ENCODE measurements at regions of chr1 and their contacts with region 1.

Region 1: DNA sequence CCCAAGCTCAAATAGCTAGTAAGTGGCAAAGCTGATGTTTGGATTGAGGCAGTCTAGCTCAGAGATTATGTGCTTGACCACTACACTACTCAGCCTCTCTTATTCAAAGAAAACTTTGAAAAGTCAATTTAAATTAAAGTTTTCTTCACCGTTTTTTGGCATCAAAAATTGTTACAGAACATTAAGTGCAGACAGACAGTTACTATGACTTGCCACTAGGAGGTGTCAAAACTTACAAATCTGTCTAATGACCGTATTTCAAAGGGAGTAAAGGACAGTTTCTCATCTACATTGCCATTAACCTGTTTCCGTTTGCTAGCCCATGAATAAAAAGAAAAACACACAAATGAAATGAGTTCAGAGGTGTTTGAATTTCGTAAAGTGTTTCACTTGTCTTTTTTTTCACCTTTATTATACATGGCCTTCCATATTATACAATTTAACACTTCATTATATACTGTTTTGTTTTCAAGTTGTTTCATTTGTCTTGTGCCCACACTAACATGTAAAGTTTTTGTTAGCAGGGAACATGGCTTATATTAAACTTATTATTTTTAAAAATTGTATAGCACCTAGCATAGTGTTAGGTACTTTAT is 57.4 kb upstream of the MTF2 start:
- DNase-seq: no peak
- H3K4me3 Mint-ChIP-seq: no peak overlapping the region
- H3K27ac Mint-ChIP-seq: no peak overlapping the region
- H3K4me1 Mint-ChIP-seq: peaks cover 6% of the 10 kb centered on the region
- H3K27me3 Mint-ChIP-seq: peaks cover 36% of the 10 kb centered on the region

Region 2: DNA sequence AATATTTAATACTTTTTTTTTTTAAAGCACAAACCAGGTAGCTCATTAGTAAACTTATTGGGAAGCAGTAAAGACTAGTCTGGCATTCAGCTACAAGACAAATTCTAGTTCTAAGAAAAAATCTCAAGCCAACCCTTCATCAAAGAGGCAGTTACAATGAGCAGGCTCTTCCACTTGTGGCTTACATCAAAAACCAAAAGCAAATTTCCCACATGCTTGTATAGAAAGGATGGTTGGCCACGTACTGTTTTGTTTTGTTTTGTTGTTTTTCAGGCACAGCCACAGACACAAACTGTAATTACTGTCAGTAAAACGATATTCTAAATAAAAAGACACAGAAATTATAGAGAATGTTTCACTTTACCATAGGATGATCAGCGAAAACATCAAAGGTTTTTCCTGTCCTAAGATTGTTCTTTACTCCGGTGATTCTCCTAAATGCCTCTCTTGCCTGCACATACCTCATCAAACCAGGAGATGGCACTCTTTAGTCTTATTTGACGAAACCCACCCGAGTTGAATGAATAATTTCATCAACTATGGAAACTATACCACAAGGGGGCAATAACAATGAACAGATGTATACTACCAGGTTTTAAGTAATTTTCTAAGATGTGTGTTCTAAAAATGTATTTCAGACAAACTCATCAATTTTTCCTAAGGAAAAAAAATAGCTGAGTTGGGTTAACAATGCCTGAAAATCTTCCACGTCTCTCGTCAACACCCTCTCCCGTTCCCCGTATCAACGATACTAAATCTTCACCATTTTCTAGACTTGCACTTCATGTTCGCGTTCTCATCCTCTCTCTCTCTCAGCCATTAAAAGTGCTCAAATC is 162.9 kb before region 1 on chr1:
- intact Hi-C with region 1: loop called (anchors 1 kb)
- DNase-seq: peak; percentile 57
- H3K4me3 Mint-ChIP-seq: peak overlapping the region; percentile 46
- H3K27ac Mint-ChIP-seq: peak overlapping the region; percentile 64
- H3K4me1 Mint-ChIP-seq: peaks cover 24% of the 10 kb centered on the region
- H3K27me3 Mint-ChIP-seq: no peaks in the 10 kb centered on the region

Region 3: DNA sequence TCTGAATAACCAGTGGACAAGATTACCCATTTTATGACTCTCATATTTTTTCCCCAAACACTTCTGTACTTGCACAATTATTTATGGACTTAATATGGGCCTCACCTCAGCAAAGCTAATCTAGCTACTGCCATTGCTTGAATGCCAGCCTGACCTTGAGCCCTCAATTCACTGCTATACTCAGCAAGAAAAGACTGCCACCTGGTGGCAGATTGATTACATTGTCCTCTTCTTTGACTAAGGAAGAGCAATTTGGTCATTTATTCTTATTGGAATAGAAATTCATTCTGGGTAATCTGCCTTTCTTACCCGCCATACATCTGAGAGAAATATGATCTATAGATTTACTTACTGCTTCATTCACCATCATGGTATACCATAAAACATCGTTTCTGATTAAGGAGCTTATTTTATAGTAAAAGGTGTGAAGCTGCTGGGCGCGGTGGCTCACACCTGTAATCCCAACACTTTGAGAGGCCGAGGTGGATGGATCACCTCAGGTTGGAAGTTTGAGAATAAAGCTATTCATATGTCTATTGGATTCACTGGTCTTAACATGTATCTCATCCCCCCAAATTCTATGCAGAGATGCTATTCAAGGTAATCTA is 27.4 kb before region 1 on chr1:
- intact Hi-C with region 1: no loop called
- DNase-seq: peak; percentile 66
- H3K4me3 Mint-ChIP-seq: no peak overlapping the region
- H3K27ac Mint-ChIP-seq: peak overlapping the region; percentile 32
- H3K4me1 Mint-ChIP-seq: peaks cover 48% of the 10 kb centered on the region
- H3K27me3 Mint-ChIP-seq: peaks cover 2% of the 10 kb centered on the region

Region 4: GRCh38 chr1:93042187-93043056 is 20.8 kb after region 1 on chr1:
- intact Hi-C with region 1: loop called (anchors 2 kb)
- DNase-seq: peak; percentile 53
- H3K4me3 Mint-ChIP-seq: peak overlapping the region; percentile 74
- H3K27ac Mint-ChIP-seq: peak overlapping the region; percentile 84
- H3K4me1 Mint-ChIP-seq: peaks cover 37% of the 10 kb centered on the region
- H3K27me3 Mint-ChIP-seq: no peaks in the 10 kb centered on the region

Region 5: DNA sequence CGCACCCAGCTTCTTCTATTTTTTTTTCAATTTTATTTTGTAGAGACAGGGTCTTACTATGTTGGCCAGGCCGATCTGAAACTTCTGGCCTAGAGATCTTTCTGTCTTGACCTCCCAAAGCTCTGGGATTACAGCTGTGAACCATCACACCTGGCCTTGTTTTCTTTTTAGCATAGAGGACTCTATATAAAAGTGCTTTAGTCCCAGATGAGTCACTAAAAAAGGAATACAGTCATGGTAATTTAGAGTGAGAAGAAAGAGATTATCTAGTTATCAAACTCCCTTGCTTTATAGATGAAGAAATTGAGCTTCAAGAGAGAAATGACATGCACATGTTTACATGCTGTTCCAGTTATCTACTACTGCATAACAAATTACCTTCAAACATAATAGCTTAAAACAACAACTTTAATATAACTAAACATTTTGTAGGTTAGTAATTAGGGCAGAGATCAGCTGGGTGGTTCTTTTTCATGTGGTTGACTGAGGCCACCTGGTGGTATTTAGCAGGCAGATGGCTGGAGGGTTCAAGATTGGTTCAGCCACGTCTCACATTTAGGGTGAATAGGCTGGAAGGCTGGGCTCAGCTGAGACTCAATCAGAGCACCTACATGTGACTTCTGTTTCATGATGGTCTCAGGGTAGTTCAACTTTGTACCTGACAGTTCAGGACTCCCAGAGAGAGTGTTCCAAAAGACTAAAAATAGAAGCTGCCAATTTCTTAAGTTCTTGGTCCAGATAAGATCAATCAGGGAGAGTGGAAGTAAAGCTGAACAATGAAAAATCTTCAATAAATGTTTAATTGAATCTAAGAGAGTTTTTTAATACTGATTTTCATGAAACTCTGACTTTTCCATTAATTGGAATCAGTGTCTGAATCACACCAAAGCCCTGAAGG is 40.5 kb after region 1 on chr1:
- intact Hi-C with region 1: loop called (anchors 1 kb)
- DNase-seq: peak; percentile 14
- H3K4me3 Mint-ChIP-seq: no peak overlapping the region
- H3K27ac Mint-ChIP-seq: no peak overlapping the region
- H3K4me1 Mint-ChIP-seq: no peaks in the 10 kb centered on the region
- H3K27me3 Mint-ChIP-seq: peaks cover 34% of the 10 kb centered on the region

Region 6: GRCh38 chr1:93114391-93114790 is 92.8 kb after region 1 on chr1:
- intact Hi-C with region 1: loop called (anchors 5 kb)
- DNase-seq: no peak
- H3K4me3 Mint-ChIP-seq: no peak overlapping the region
- H3K27ac Mint-ChIP-seq: no peak overlapping the region
- H3K4me1 Mint-ChIP-seq: peaks cover 15% of the 10 kb centered on the region
- H3K27me3 Mint-ChIP-seq: no peaks in the 10 kb centered on the region

Region 7: DNA sequence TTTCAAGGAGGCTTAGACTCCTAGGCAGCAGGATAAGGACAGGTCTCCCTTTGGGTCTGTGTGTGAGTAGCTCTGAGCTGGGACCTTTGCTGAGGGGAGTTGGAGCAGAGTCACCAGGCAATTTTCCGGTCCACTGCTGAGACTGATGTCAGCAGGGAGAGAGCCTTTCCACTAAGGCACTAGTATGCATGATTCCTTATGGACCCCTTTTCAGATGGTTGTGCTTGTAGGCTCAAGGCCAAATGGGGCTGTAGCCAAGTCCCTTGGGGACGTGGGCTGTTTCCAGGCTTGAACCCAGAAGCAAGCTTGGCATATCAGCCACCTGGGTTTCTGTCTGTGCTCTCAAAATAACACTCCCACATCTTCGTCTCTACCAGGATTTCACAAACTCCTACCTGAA is 231.9 kb after region 1 on chr1:
- intact Hi-C with region 1: no loop called
- DNase-seq: no peak
- H3K4me3 Mint-ChIP-seq: no peak overlapping the region
- H3K27ac Mint-ChIP-seq: no peak overlapping the region
- H3K4me1 Mint-ChIP-seq: no peaks in the 10 kb centered on the region
- H3K27me3 Mint-ChIP-seq: no peaks in the 10 kb centered on the region

Measured in activated T-helper 1 cell treated with anti-CD3 and anti-CD28 coated beads, Interleukin-12 subunit alpha, Interleukin-12 subunit beta, Interleukin-2, Interleukin-4 antibody, amounts not matched to agents 30 ng/mL and 10 ng/mL and 1 ng/mL, durations not matched to agents 14 hours and 24 hours and 36 hours (primary cell).